ENCODE measurements at regions of chr4 and their contacts with region 1.

Region 1: GRCh38 chr4:52028969-52029368 is 8.8 kb upstream of the LRRC66 start:
- DNase-seq: no peak
- H3K4me3 ChIP-seq: no peak overlapping the region
- H3K27ac ChIP-seq: no peak overlapping the region
- H3K4me1 ChIP-seq: no peaks in the 10 kb centered on the region
- H3K27me3 ChIP-seq: no peaks in the 10 kb centered on the region
- CTCF ChIP-seq: no peak
- POLR2A ChIP-seq: no peak

Region 2: GRCh38 chr4:51831133-51831532 is 197.8 kb before region 1 on chr4:
- CTCF ChIA-PET with region 1: interaction called, 5 read pairs
- POLR2A ChIA-PET with region 1: no interaction called
- dilution Hi-C with region 1: no loop called
- intact Hi-C with region 1: loop called (anchors 1 kb)
- DNase-seq: peak; percentile 60
- H3K4me3 ChIP-seq: no peak overlapping the region
- H3K27ac ChIP-seq: no peak overlapping the region
- H3K4me1 ChIP-seq: no peaks in the 10 kb centered on the region
- H3K27me3 ChIP-seq: peaks cover 13% of the 10 kb centered on the region in 2 experiments
- CTCF ChIP-seq: peak; percentile 54 to 62
- POLR2A ChIP-seq: no peak

Region 3: DNA sequence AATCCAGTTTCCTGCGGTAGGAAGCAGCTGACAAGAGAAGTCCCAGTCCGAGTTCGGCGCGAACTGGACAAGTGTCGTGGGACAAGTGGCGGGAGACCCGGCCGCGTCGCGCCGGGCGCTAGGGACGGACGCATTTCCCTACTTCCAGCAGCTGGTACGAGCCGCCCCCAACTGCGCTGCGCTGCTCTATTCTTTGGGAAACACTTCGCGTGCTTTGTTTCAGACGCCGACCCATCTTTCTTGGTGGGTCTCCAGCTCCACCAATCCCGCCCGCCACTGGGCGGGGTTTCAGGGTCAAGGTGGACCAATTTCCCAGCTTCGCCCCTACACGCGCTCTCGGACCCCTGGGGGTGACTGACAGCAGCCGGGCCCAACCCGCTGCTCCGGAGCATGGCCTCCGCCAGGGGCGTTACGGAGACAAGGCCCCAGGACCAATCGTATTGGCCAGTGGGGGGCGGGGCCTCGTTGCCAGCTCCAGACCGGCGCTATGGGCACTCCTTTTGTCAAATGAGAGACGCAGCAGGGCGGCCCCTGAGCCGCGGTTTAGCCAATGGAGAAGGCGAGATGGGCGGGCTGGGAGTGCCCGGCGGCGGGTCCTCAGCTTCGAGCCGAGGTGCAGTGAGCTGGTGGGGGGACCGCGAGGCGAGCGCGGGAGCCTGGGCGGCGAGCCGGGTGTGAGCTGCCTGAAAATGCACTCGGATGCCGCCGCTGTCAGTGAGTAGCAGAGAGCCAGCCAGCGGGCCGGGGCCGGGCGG is 186.2 kb before region 1 on chr4 and contains the start of gene DCUN1D4:
- CTCF ChIA-PET with region 1: no interaction called
- POLR2A ChIA-PET with region 1: no interaction called
- dilution Hi-C with region 1: no loop called
- intact Hi-C with region 1: loop called (anchors 2 kb)
- DNase-seq: peak; percentile 100
- H3K4me3 ChIP-seq: peak within 1 kb of the TSS; percentile 61 to 91 (median 84)
- H3K27ac ChIP-seq: peak within 1 kb of the TSS; percentile 22
- H3K4me1 ChIP-seq: peaks cover 9% of the 10 kb centered on the region
- H3K27me3 ChIP-seq: no peaks in the 10 kb centered on the region
- CTCF ChIP-seq: peak in 1 of 2 donors; percentile 43
- POLR2A ChIP-seq: no peak
- total RNA-seq, gene DCUN1D4: 50.2 and 50.6 TPM in 2 replicates

Region 4: DNA sequence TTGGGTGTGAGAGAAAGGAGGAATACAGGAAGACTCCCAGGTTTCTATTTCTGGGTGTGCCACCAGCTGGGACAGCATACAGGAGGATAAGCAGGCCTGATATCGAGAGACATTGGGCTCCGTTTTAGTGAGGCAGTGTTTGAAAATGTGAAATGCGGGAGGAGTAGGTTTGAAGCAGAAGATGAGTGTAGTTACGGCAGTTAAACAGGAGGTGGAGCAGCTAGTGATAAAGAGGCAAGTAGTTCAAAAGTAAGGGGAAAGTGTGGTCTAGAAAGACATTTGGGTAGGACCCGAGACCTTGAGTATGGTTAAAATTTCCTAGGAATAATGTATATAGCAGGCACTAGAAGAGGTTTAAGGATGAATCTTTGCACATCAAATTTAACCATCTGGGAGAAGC is 143.6 kb before region 1 on chr4:
- CTCF ChIA-PET with region 1: interaction called, 3 read pairs
- POLR2A ChIA-PET with region 1: no interaction called
- dilution Hi-C with region 1: no loop called
- intact Hi-C with region 1: loop called (anchors 1 kb)
- DNase-seq: peak; percentile 40
- H3K4me3 ChIP-seq: no peak overlapping the region
- H3K27ac ChIP-seq: no peak overlapping the region
- H3K4me1 ChIP-seq: no peaks in the 10 kb centered on the region
- H3K27me3 ChIP-seq: no peaks in the 10 kb centered on the region
- CTCF ChIP-seq: peak; percentile 40 to 44
- POLR2A ChIP-seq: no peak

Region 5: DNA sequence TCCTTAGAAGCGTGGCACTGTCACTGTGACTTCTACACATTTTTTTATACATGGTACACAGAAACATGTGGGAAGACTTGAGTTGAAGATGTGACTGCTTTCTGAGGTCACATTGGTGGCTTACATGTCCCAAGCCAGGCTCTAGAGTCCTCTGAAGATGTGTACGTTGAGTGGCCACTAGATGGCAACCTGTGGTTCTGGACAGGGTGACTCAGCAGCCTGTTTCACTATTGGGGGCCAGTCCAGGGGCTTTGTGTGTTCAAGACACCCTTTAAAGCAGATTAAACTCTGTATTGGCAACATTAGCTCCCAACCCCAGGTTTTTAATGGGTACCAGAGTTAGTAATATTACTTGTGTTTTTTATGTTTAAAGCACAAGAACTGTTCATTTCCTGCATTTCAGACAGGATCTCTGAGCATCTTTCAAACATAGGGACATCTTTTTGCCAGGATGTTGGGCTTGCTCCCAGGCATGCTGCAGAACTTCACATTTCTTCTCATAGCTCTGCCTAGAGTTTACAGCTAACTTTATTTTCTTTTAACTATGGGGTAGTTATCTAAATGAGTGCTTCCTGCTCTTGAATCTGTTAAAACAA is 133.1 kb before region 1 on chr4:
- CTCF ChIA-PET with region 1: no interaction called
- POLR2A ChIA-PET with region 1: no interaction called
- dilution Hi-C with region 1: no loop called
- intact Hi-C with region 1: loop called (anchors 1 kb)
- DNase-seq: peak; percentile 74
- H3K4me3 ChIP-seq: no peak overlapping the region
- H3K27ac ChIP-seq: peak overlapping the region; percentile 55
- H3K4me1 ChIP-seq: peaks cover 13% of the 10 kb centered on the region
- H3K27me3 ChIP-seq: no peaks in the 10 kb centered on the region
- CTCF ChIP-seq: peak; percentile 82 to 87
- POLR2A ChIP-seq: no peak

Region 6: GRCh38 chr4:51909236-51909703 is 119.7 kb before region 1 on chr4:
- CTCF ChIA-PET with region 1: no interaction called
- POLR2A ChIA-PET with region 1: no interaction called
- dilution Hi-C with region 1: no loop called
- intact Hi-C with region 1: no loop called
- DNase-seq: no peak
- H3K4me3 ChIP-seq: no peak overlapping the region
- H3K27ac ChIP-seq: no peak overlapping the region
- H3K4me1 ChIP-seq: peaks cover 27% of the 10 kb centered on the region
- H3K27me3 ChIP-seq: no peaks in the 10 kb centered on the region
- CTCF ChIP-seq: no peak
- POLR2A ChIP-seq: no peak

Region 7: DNA sequence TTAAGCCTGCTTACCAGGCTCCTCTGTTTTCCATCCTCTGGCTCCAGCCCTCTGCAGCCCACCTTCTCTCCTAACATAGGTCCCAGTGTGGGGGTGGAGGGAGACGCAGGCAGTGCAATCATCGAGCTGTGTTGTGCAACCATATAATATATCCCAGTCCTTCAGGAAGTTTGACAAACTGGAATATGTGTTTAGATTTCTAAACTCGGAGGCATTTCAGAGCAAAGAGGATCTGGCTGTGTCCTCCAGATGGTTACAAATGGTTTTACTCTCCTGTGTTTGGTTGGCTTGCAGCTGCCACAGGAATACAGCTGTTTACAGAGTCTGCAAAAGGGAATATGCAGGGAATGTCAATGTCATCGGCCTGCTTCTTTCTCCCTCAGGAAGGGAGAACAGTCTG is 1757.7 kb after region 1 on chr4:
- CTCF ChIA-PET with region 1: no interaction called
- POLR2A ChIA-PET with region 1: no interaction called
- dilution Hi-C with region 1: no loop called
- intact Hi-C with region 1: no loop called
- DNase-seq: no peak
- H3K4me3 ChIP-seq: no peak overlapping the region
- H3K27ac ChIP-seq: no peak overlapping the region
- H3K4me1 ChIP-seq: no peaks in the 10 kb centered on the region
- H3K27me3 ChIP-seq: peaks cover 0 to 7% of the 10 kb centered on the region in 2 experiments
- CTCF ChIP-seq: no peak
- POLR2A ChIP-seq: no peak